RWPE1 (cell line): ENCODE measurements at regions of chr6 and their contacts with region 1.

Region 1: GRCh38 chr6:148839044-148839443 is 92.2 kb downstream of the UST start:
- DNase-seq: no peak
- H3K27ac ChIP-seq: no peak overlapping the region
- CTCF ChIP-seq: no peak

Region 2: DNA sequence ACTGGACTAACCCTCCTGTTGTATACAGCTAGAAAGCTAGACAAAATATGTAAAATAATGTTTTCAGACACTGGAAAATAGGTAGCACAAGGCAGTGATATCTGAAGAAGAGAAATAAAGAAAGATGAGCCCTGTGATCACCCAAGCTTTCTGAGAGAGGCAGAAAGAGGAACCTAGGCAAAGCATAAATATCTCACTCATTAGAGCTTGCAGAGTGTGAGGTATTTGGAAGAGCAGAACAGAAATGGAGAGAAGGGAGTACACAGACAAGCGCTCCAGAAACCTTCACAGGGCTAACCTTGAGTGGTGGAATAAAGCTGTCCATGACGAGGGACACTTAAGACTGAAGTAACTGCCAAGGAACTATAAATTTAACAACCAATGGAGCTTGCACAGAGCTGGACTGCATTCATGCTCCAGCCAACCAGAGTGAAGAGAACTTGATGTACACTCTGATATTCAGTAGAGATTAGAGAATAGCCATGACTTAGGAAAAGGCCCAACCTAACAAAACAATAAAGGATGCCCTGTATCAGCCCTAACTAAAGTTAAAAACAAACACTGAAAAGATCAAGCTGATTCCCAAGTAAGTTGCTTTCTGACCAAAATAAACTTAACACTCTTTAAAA is 1915.7 kb before region 1 on chr6:
- CTCF ChIA-PET with region 1: no interaction called
- POLR2A ChIA-PET with region 1: no interaction called
- DNase-seq: no peak
- H3K27ac ChIP-seq: no peak overlapping the region
- CTCF ChIP-seq: no peak

Region 3: DNA sequence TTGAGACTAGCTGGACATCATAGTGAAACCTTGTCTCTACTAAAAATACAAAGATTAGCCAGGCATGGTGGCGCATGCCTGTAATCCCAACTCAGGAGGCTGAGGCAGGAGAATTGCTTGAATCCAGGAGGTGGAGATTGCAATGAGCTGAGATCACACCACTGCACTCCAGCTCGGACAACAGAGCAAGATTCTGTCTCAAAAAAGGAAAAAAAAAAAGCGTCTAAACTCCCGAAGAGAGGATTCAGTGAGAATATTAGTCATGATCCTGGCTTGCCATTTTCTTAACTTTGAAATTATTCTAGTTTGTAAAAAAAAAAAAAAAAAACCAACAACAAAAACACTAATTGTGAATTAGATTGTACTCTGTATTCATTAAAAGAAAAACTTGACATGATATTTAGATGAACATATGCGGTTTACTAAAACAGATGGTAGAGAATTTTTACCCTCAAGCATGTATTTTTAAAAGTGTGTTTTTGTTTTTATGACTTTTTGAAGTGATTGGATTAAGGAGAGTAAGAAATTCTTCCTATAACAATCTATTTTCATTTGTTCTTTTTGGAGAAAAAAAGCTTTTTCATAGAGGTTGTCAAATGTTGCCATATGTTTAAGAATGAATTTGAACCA is 11.5 kb before region 1 on chr6:
- CTCF ChIA-PET with region 1: no interaction called
- POLR2A ChIA-PET with region 1: interaction called, 11 read pairs
- DNase-seq: no peak
- H3K27ac ChIP-seq: no peak overlapping the region
- CTCF ChIP-seq: no peak

Region 4: DNA sequence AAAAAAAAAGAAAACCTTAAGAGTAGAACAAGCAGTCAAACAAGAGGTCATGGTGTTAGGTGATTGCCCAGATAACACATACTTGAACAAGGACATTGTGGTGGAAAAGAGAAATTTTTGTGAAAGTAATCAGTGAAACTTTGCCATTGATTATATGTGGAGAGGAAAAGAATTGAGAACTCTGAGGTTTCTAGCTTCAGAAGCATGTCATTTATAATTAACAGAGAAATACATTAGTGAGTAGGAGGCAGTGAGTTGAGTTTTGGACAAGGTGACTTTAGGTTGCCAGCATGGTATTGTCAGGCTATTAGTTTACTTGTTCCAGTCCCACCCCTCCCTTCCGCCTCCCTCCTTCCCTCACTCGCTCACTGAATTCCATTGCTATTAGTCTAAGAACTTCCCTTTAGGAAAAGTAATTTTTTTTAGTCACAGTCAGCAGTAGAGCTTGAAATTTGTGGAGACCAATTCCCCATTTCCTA is 495.7 kb after region 1 on chr6:
- CTCF ChIA-PET with region 1: no interaction called
- POLR2A ChIA-PET with region 1: no interaction called
- DNase-seq: peak; percentile 64
- H3K27ac ChIP-seq: no peak overlapping the region
- CTCF ChIP-seq: no peak